ENCODE measurements at regions of chr11 and their contacts with region 1.

Region 1: GRCh38 chr11:102733232-102733875 is 8.6 kb upstream of the MMP8 start:
- H3K4me3 Mint-ChIP-seq: no peak overlapping the region
- H3K27ac Mint-ChIP-seq: no peak overlapping the region
- H3K4me1 Mint-ChIP-seq: peaks cover 16% of the 10 kb centered on the region
- H3K27me3 Mint-ChIP-seq: peaks cover 37% of the 10 kb centered on the region

Region 2: DNA sequence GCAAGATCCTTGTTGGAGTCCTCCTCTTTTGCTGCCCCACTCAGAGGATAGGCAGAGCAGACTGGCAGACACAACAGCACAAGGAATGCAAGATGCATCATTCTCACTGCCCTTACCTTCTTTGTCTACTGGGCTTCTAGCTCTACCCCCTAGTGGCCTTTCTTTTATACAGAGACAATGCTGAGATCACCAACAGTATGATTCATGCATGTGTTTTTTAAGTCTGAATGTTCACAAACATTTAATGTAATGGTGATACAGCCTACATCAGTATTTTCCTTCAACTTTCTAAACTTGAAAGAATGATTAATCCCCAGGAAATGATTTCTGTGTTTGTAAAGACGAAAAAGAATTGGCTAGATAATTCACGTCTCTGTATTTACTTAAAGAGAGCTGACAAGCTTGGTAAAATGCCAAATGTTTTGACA is 47.2 kb after region 1 on chr11 and contains the start of gene MMP10:
- intact Hi-C with region 1: loop called (anchors 1 kb)
- H3K4me3 Mint-ChIP-seq: no peak within 1 kb of the TSS
- H3K27ac Mint-ChIP-seq: no peak within 1 kb of the TSS
- H3K4me1 Mint-ChIP-seq: peaks cover 6% of the 10 kb centered on the region
- H3K27me3 Mint-ChIP-seq: peaks cover 34% of the 10 kb centered on the region

Region 3: DNA sequence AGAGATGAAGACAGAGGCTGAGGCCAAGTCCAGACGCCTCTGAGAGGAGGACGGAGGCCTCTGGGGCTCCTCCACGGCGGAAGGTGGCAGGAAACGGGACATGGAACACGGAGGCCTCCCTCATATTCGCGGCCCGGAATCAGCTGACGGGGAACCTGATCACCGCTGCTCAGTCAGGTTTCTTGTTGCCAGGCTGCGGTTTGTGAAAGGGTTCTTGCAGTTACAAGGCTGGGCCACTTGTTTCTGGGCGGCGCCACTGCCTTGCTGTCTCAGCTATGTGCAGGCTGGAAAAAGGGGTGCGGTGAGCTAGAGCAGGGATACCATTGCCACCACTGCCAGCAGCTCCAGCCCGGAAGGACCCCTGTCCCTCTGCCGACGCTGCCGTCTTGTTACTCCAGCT is 74.6 kb after region 1 on chr11:
- intact Hi-C with region 1: no loop called
- H3K4me3 Mint-ChIP-seq: no peak overlapping the region
- H3K27ac Mint-ChIP-seq: no peak overlapping the region
- H3K4me1 Mint-ChIP-seq: no peaks in the 10 kb centered on the region
- H3K27me3 Mint-ChIP-seq: peaks cover 23% of the 10 kb centered on the region